HEK293 (cell line): ENCODE measurements at regions of chr5 and their contacts with region 1.

Region 1: GRCh38 chr5:112174959-112175594 is 244.0 kb downstream of the EPB41L4A start:
- H3K4me3 ChIP-seq: no peak overlapping the region
- H3K27ac ChIP-seq: no peak overlapping the region
- H3K4me1 ChIP-seq: no peaks in the 10 kb centered on the region
- CTCF ChIP-seq: 0 out of 2 replicates have a peak, but pooled peaks have one; percentile 12

Region 2: GRCh38 chr5:112064956-112065355 is 110.1 kb before region 1 on chr5:
- CTCF ChIA-PET with region 1: no interaction called
- POLR2A ChIA-PET with region 1: no interaction called
- H3K4me3 ChIP-seq: no peak overlapping the region
- H3K27ac ChIP-seq: no peak overlapping the region
- H3K4me1 ChIP-seq: no peaks in the 10 kb centered on the region
- CTCF ChIP-seq: no peak

Region 3: DNA sequence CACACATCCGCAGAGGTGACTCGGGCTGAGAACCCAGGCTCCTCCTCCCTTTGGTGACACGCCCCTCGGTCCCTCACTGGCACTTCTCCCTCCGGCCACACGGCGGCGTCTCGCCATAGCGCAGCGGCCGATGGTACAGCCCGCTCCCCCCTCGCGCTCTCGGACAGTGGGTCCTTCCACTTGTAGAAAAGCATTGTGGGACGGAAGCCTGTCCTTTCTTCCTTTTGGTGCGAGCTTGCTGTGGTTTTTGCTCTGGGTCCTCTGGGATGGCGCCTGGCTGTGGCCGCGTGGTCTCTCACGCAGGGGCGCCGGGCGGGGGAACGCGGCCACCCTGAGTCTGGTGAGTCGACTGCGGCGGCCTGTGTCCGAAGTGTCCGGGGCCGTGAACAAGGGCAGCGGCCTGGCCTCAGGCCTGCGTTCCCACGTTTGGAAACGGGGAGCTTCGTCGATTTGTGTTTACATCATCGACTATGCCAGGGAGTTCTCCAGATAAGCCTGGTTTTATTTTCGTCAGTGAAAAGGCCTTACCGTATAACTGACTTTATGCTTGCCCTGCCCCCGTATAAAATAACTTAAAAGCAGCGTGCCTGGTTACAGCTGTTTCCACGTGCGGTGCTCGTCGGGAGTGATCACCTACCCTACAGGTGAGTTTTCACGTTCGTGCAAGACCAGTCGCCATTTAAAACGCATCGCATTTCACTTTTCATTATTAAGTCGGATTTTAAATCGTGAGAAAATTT is 14.3 kb before region 1 on chr5:
- CTCF ChIA-PET with region 1: interaction called, 31 read pairs
- POLR2A ChIA-PET with region 1: interaction called, 4 read pairs
- H3K4me3 ChIP-seq: peak overlapping the region; percentile 90
- H3K27ac ChIP-seq: peak overlapping the region; percentile 75; the same call in 1 of the 2 replicates
- H3K4me1 ChIP-seq: peaks cover 5% of the 10 kb centered on the region
- CTCF ChIP-seq: peak; percentile 100

Region 4: DNA sequence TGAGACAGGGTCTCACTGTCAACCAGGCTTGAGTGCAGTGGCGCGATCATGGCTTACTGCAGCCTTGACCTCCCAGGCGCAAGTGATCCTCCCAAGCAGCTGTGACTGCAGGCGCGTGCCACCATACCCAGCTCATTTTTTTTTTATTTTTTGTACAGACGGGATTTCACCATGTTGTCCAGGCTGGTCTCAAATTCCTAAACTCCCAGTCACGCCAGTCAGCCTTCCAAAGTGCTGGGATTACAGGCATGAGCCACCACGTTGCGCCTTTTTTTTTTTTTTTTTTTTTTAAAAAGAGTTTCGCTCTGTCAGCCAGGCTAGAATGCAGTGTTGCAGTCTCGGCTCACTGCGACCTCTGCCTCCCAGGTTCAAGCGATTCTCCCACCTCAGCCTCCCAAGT is 658.9 kb after region 1 on chr5:
- CTCF ChIA-PET with region 1: no interaction called
- POLR2A ChIA-PET with region 1: interaction called, 10 read pairs
- H3K4me3 ChIP-seq: no peak overlapping the region
- H3K27ac ChIP-seq: no peak overlapping the region
- H3K4me1 ChIP-seq: no peaks in the 10 kb centered on the region
- CTCF ChIP-seq: no peak